ENCODE measurements at regions of chr14 and their contacts with region 1.

Region 1: GRCh38 chr14:22791301-22791700 is 23.9 kb downstream of the SLC7A7 start:
- DNase-seq: no peak
- ATAC-seq: no peak
- H3K4me3 Mint-ChIP-seq: peak overlapping the region; percentile 28
- H3K27ac Mint-ChIP-seq: peak overlapping the region; percentile 91
- H3K4me1 Mint-ChIP-seq: peaks cover 70% of the 10 kb centered on the region
- H3K27me3 Mint-ChIP-seq: no peaks in the 10 kb centered on the region
- CTCF ChIP-seq: no peak

Region 2: GRCh38 chr14:22671622-22672021 is 119.7 kb before region 1 on chr14:
- CTCF ChIA-PET with region 1: no interaction called
- POLR2A ChIA-PET with region 1: no interaction called
- intact Hi-C with region 1: no loop called
- DNase-seq: no peak
- ATAC-seq: no peak
- H3K4me3 Mint-ChIP-seq: no peak overlapping the region
- H3K27ac Mint-ChIP-seq: no peak overlapping the region
- H3K4me1 Mint-ChIP-seq: no peaks in the 10 kb centered on the region
- H3K27me3 Mint-ChIP-seq: peaks cover 2% of the 10 kb centered on the region
- CTCF ChIP-seq: no peak

Region 3: GRCh38 chr14:22802860-22803686 is 11.8 kb after region 1 on chr14:
- CTCF ChIA-PET with region 1: interaction called, 3 read pairs
- POLR2A ChIA-PET with region 1: interaction called, 52 read pairs
- intact Hi-C with region 1: loop called (anchors 1 kb)
- DNase-seq: no peak
- ATAC-seq: peak; percentile 87
- H3K4me3 Mint-ChIP-seq: peak overlapping the region; percentile 74
- H3K27ac Mint-ChIP-seq: peak overlapping the region; percentile 93
- H3K4me1 Mint-ChIP-seq: peaks cover 81% of the 10 kb centered on the region
- H3K27me3 Mint-ChIP-seq: no peaks in the 10 kb centered on the region
- CTCF ChIP-seq: no peak

Region 4: GRCh38 chr14:22814941-22815713 is 23.8 kb after region 1 on chr14 and contains the start of gene SLC7A7:
- CTCF ChIA-PET with region 1: interaction called, 3 read pairs
- POLR2A ChIA-PET with region 1: interaction called, 55 read pairs
- intact Hi-C with region 1: no loop called
- DNase-seq: no peak
- ATAC-seq: no peak
- H3K4me3 Mint-ChIP-seq: peak within 1 kb of the TSS; percentile 52
- H3K27ac Mint-ChIP-seq: peak within 1 kb of the TSS; percentile 91
- H3K4me1 Mint-ChIP-seq: peaks cover 82% of the 10 kb centered on the region
- H3K27me3 Mint-ChIP-seq: no peaks in the 10 kb centered on the region
- CTCF ChIP-seq: no peak
- total RNA-seq, gene SLC7A7: 30.8 and 33.7 TPM in 2 replicates

Region 5: GRCh38 chr14:22829661-22830442 is 38.6 kb after region 1 on chr14 and contains the start of gene MRPL52:
- CTCF ChIA-PET with region 1: interaction called, 5 read pairs
- POLR2A ChIA-PET with region 1: interaction called, 21 read pairs
- intact Hi-C with region 1: no loop called
- DNase-seq: peak; percentile 76
- ATAC-seq: peak; percentile 94
- H3K4me3 Mint-ChIP-seq: peak within 1 kb of the TSS; percentile 93
- H3K27ac Mint-ChIP-seq: peak within 1 kb of the TSS; percentile 97
- H3K4me1 Mint-ChIP-seq: peaks cover 27% of the 10 kb centered on the region
- H3K27me3 Mint-ChIP-seq: no peaks in the 10 kb centered on the region
- CTCF ChIP-seq: no peak
- total RNA-seq, gene MRPL52: 142 and 150 TPM in 2 replicates

Region 6: GRCh38 chr14:22836301-22837113 is 45.2 kb after region 1 on chr14 and contains the start of gene MMP14:
- CTCF ChIA-PET with region 1: no interaction called
- POLR2A ChIA-PET with region 1: interaction called, 21 read pairs
- intact Hi-C with region 1: no loop called
- DNase-seq: no peak
- ATAC-seq: peak; percentile 38
- H3K4me3 Mint-ChIP-seq: peak within 1 kb of the TSS; percentile 88
- H3K27ac Mint-ChIP-seq: peak within 1 kb of the TSS; percentile 76
- H3K4me1 Mint-ChIP-seq: peaks cover 17% of the 10 kb centered on the region
- H3K27me3 Mint-ChIP-seq: peaks cover 2% of the 10 kb centered on the region
- CTCF ChIP-seq: no peak
- total RNA-seq, gene MMP14: 3.4 and 4.1 TPM in 2 replicates

Region 7: DNA sequence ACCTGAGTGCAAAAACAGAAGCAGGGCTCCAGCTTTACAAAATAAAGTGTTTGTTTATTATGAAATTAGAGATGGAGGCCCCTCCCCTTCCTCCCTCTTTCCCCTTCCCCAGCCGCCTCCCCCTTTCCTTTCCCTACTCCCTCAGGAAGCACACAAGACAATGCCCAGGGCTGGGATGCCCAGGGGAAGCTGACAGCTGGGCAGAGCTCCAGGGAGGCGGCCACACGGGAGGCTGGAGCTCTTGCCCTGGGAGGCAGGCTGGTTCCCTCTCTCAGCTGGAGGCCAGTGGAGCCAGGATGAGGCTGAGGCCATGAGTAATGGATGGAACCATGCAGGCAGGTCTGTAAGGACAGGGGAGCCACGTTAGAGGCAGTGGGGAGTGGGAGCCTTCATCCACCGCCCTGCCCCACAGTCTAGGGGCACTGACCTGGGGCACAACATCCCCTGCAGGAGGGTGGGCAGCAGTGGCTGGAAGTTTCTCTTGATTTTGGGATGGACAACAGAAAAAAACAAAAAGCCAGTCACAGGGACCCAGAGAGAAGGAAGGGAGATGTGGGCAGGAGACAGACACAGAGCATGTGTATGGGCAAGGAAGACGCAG is 255.8 kb after region 1 on chr14:
- CTCF ChIA-PET with region 1: no interaction called
- POLR2A ChIA-PET with region 1: no interaction called
- intact Hi-C with region 1: no loop called
- DNase-seq: no peak
- ATAC-seq: no peak
- H3K4me3 Mint-ChIP-seq: no peak overlapping the region
- H3K27ac Mint-ChIP-seq: no peak overlapping the region
- H3K4me1 Mint-ChIP-seq: no peaks in the 10 kb centered on the region
- H3K27me3 Mint-ChIP-seq: peaks cover 4% of the 10 kb centered on the region
- CTCF ChIP-seq: no peak